Activated CD8-positive, alpha-beta memory T cell treated with anti-CD3 and anti-CD28 coated beads, Interleukin-2, amount 10 ng/mL, durations not matched to agents 7 days and 5 days (primary cell): ENCODE measurements at regions of chr1 and their contacts with region 1.

Region 1: DNA sequence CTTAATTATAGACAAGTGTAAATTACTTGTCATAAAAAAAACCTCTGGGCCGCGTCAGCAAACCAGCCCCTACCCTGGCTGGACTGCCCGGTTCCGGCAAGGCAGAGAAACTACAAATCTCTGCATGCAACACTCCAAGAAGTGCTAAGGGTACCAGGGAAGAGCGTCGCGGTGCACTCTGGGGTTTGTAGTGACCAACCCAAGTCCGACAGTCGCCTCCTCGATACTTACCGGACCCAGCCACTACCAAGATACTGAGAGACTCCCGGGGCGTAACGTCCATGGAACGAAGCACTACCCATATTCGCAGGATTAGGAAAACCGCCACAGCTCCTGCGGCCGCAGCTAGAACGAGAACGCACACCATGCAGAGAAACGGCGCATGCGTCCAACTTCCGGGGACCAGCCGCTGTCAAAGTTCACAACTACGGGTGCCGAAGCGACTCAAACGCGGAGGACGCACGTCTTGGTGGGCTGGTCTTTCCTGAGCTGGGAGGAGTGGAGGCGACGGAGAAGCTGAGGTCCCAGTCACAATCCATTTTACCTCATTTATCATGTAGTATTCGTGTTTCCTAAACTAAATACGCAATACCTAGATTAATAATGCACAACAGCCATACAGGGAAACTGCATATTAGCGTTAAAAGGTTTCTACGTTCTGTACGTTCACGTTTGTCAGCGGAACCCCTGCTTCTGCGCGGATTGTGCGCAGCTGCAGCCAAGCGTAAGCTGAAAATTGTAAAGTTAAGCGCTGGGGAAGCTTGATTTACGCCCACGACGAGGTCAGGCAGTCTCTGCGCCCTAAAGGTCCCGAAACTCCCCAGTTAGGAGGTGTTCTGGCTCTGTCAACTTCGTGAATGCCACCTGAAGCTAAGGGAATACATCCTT is at the start of gene ALG14:
- DNase-seq: peak; percentile 95
- ATAC-seq: peak; percentile 97
- H3K4me3 Mint-ChIP-seq: peak within 1 kb of the TSS; percentile 87
- H3K27ac Mint-ChIP-seq: peak within 1 kb of the TSS; percentile 89
- H3K4me1 Mint-ChIP-seq: peaks cover 20% of the 10 kb centered on the region
- H3K27me3 Mint-ChIP-seq: peaks cover 4% of the 10 kb centered on the region
- total RNA-seq, gene ALG14: 2.6 to 2.8 TPM

Region 2: DNA sequence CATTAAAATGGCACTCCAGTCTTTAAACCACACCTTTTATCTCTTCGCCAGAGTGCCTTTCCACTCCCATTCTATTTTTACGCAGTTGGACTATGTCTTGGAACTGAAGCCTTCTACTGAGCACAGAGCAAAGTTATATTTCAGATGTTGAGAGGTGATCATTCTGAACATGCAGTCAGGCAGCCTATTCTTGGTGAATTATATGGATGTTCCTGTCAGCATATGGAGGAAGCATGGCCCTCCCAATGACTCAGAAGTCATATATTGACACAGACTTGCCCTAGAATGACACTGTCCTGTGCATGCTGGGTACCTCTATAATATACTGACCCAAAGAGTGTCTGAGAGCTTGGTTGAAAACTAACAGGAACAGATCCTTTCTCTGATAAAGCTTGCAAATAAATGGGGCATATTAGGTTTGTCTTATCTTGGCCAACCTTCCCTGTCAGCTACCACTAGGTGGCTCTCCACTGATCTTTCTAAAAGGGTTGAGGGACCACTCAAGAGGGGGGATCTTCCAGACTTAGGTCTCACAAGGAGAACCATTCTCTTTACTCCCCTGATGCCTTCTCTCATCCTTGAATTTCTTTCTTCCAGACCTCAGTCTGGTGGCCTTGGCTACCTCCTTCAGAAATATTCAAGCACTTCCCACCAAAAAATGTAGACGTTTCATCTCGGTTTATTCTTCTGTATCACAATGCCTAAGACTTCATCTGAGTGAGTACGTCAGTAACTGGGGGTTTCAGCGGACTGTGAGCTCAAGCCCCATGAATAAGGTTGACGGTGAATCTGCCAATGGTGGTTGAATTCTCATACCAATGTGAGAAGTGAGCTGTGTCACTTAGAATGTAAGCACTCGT is 11.8 kb after region 1 on chr1:
- CTCF ChIA-PET with region 1: interaction called, 23 read pairs
- DNase-seq: no peak
- ATAC-seq: no peak
- H3K4me3 Mint-ChIP-seq: no peak overlapping the region
- H3K27ac Mint-ChIP-seq: no peak overlapping the region
- H3K4me1 Mint-ChIP-seq: no peaks in the 10 kb centered on the region
- H3K27me3 Mint-ChIP-seq: peaks cover 20% of the 10 kb centered on the region